AG04450 (cell line): ENCODE measurements at regions of chr22 and their contacts with region 1.

Region 1: DNA sequence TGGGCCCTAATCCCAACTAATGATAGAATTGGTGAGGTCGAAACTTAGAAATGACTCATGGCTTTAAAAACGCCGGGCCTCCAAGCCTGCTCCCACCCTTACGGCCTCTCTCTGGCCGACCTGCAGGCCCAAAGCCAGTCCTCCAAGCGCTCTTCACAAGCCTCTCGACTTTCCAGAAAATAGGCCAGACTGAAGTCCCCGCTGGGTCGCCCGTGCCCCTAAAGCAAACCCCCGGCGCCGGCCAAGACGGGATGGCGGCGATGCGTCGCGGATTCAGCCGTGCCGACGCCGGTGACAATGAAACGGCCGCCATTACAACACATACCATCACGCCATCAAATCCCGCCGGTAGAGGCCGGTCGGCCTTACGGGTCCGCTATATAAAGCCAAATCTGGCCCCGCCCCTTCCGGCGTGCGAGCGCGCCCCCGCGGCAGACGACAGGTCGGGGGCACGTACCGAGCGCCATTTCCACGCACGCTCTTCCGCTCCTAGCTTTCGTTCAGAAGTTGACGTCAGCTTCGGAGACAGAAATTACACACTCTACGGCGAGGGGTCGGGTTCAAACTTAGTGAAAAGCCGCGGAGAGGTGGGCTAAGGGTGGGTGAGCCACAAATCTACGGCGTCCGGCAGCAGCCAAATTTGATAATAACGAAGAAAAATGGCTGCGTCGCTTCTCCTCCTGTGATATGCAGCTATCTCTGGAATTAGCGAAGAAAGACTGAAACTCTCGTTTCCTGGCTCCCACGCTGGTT is at the start of gene RPL3:
- DNase-seq: peak; percentile 99
- H3K4me3 ChIP-seq: peak within 1 kb of the TSS; percentile 87
- H3K27ac ChIP-seq: peak within 1 kb of the TSS; percentile 98
- H3K27me3 ChIP-seq: no peaks in the 10 kb centered on the region
- CTCF ChIP-seq: peak; percentile 23; the same call in 1 of the 2 replicates
- polyA plus RNA-seq, gene RPL3: 3,445 and 3,813 TPM in 2 replicates

Region 2: GRCh38 chr22:39021552-39022250 is 297.7 kb before region 1 on chr22:
- CTCF ChIA-PET with region 1: no interaction called
- POLR2A ChIA-PET with region 1: no interaction called
- DNase-seq: no peak
- H3K4me3 ChIP-seq: peak overlapping the region; percentile 12; the same call in 1 of the 2 replicates
- H3K27ac ChIP-seq: no peak overlapping the region
- H3K27me3 ChIP-seq: no peaks in the 10 kb centered on the region
- CTCF ChIP-seq: no peak

Region 3: GRCh38 chr22:39170825-39171622 is 148.4 kb before region 1 on chr22:
- CTCF ChIA-PET with region 1: interaction called, 102 read pairs
- POLR2A ChIA-PET with region 1: interaction called, 21 read pairs
- DNase-seq: peak; percentile 39
- H3K4me3 ChIP-seq: no peak overlapping the region
- H3K27ac ChIP-seq: no peak overlapping the region
- H3K27me3 ChIP-seq: peaks cover 7% of the 10 kb centered on the region
- CTCF ChIP-seq: peak; percentile 92

Region 4: GRCh38 chr22:39343259-39344048 is 24.0 kb after region 1 on chr22:
- CTCF ChIA-PET with region 1: interaction called, 17 read pairs
- POLR2A ChIA-PET with region 1: interaction called, 26 read pairs
- DNase-seq: no peak
- H3K4me3 ChIP-seq: no peak overlapping the region
- H3K27ac ChIP-seq: no peak overlapping the region
- H3K27me3 ChIP-seq: peaks cover 2% of the 10 kb centered on the region
- CTCF ChIP-seq: peak; percentile 88

Region 5: GRCh38 chr22:39395936-39396796 is 76.7 kb after region 1 on chr22:
- CTCF ChIA-PET with region 1: interaction called, 3 read pairs
- POLR2A ChIA-PET with region 1: interaction called, 40 read pairs
- DNase-seq: no peak
- H3K4me3 ChIP-seq: no peak overlapping the region
- H3K27ac ChIP-seq: no peak overlapping the region
- H3K27me3 ChIP-seq: no peaks in the 10 kb centered on the region
- CTCF ChIP-seq: no peak

Region 6: DNA sequence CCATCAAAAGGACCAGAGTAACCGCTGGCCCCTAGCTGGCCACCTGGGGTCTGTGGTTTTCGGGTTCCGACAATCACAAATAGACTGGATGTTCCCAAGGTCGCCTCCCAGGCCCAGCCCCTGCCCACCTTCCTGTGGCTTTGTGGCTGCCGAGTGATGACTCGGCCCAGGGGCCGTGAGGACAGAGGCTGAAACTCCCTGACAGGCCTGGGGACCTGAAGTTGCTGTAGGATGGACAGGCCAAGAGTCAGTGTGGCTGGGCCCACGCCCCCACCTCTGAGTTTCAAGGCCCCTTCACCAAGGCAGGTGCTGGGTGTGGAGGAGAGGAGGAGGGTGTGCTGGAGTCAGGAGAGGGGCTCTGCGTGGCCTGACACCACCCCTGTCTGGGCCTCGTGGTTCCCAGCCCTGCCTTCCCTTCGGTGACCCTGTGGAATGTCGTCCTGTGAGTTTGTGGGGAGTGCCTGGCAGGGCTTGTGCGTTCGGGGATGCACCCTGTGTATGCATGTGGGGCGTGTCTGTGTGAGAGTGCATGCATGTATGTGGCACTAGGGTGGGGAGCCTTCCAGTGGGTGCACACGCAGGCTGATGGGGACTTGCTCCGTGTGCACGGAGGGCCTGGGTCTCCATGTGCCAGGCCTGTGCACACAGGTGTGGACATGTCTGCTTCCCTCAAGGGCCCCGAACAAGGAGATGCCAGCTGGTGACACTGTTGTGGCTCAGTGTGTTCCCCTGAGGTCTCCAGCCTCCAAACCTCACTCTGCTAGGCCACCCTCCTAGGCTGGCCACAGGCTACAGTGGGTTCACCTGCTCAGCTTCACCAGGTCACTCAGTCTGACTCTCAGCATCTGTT is 129.0 kb after region 1 on chr22:
- CTCF ChIA-PET with region 1: no interaction called
- POLR2A ChIA-PET with region 1: interaction called, 12 read pairs
- DNase-seq: no peak
- H3K4me3 ChIP-seq: no peak overlapping the region
- H3K27ac ChIP-seq: no peak overlapping the region
- H3K27me3 ChIP-seq: peaks cover 25% of the 10 kb centered on the region
- CTCF ChIP-seq: no peak

Region 7: GRCh38 chr22:39520054-39520891 is 200.8 kb after region 1 on chr22 and contains the start of gene ATF4:
- CTCF ChIA-PET with region 1: interaction called, 6 read pairs
- POLR2A ChIA-PET with region 1: interaction called, 45 read pairs
- DNase-seq: peak; percentile 99
- H3K4me3 ChIP-seq: peak within 1 kb of the TSS; percentile 87
- H3K27ac ChIP-seq: peak within 1 kb of the TSS; percentile 99
- H3K27me3 ChIP-seq: no peaks in the 10 kb centered on the region
- CTCF ChIP-seq: no peak
- polyA plus RNA-seq, gene ATF4: 844 and 936 TPM in 2 replicates